MCF 10A (cell line): ENCODE measurements at regions of chr3 and their contacts with region 1.

Region 1: GRCh38 chr3:128969993-128970739 is 23.7 kb downstream of the CFAP92 start:
- DNase-seq: peak; percentile 43
- H3K4me3 Mint-ChIP-seq: no peak overlapping the region
- H3K27ac Mint-ChIP-seq: no peak overlapping the region
- H3K4me1 Mint-ChIP-seq: no peaks in the 10 kb centered on the region
- H3K27me3 Mint-ChIP-seq: no peaks in the 10 kb centered on the region
- CTCF ChIP-seq: peak; percentile 93

Region 2: DNA sequence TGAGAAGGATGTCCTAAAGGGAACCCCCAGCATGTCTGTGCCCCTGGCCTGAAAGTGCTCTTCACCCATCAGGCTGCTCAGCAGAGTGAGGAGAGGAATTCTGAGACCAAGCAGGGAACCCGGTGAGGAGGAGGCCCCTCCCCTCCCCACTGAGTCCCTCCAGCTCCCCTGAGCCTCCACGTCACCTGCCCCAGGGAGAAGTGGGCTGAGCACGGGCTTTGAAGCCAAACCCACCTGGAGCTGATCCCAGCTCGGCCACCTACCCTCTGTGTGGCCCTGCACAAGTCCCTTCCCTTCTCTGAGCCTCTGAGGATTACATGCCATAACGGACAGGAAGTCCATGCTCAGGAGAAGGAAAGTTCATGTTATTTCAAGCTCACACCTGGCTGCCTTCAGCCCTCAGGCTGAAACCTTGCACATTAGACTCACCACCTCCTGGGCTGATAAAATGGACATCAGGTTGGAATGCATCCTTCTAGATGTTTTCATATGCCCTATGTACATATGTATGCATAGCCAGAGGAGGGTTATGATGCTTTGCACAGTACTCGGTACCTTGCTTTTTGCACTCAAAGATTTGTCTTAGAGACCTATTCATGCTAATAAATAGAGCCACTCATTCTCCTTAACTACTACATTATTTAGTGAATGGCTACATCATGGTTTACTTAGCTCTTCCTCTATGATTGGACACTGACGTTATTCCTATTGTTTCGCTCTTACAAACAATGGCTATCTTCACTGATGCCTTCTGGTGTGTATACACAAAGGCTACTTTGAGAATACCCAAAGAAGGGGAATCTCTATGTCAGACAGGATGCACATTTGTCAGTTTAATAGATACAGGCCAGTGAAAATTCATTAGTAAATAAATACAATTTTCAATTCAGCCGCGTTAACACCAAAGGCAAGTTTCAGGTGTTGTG is 445.5 kb before region 1 on chr3:
- CTCF ChIA-PET with region 1: no interaction called
- POLR2A ChIA-PET with region 1: no interaction called
- intact Hi-C with region 1: no loop called
- DNase-seq: no peak
- H3K4me3 Mint-ChIP-seq: no peak overlapping the region
- H3K27ac Mint-ChIP-seq: no peak overlapping the region
- H3K4me1 Mint-ChIP-seq: no peaks in the 10 kb centered on the region
- H3K27me3 Mint-ChIP-seq: peaks cover 71% of the 10 kb centered on the region
- CTCF ChIP-seq: no peak

Region 3: DNA sequence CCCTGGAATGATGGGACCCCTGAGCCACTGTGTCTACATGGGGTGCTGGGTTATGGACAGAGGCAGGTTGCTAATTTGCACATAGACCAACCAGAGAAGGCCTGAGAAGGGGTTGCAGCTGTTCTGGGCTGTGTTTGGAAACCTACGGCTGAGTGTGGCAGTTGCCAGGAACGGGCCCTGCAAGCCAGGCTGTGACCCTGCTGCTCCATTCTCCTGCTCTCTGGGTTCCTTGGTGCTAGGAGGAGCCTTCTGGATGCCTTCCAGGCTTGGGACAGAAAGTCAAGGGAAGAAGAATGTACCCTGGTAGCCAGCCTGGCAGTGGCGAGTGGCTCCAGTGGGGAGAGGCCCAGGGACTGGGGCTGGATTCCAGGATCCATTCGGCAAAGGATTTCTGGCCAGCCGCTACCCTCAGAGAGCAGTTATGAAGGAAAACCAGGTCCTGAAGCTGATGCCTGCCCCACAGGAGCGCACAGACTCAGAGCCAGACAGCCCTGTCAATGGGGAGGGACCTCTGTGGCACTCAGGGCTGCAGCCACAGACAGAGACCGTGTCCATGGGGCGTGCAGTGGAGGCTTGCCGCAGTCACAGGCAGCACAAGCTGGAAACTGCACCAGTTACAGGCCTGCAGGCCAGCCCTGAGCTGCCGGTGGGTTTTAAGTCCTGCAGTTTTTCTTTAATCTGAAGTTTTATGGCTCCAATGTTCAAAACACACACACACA is 145.9 kb before region 1 on chr3:
- CTCF ChIA-PET with region 1: no interaction called
- POLR2A ChIA-PET with region 1: no interaction called
- intact Hi-C with region 1: no loop called
- DNase-seq: no peak
- H3K4me3 Mint-ChIP-seq: no peak overlapping the region
- H3K27ac Mint-ChIP-seq: no peak overlapping the region
- H3K4me1 Mint-ChIP-seq: no peaks in the 10 kb centered on the region
- H3K27me3 Mint-ChIP-seq: no peaks in the 10 kb centered on the region
- CTCF ChIP-seq: no peak

Region 4: GRCh38 chr3:128895843-128896697 is 74.1 kb before region 1 on chr3:
- CTCF ChIA-PET with region 1: no interaction called
- POLR2A ChIA-PET with region 1: no interaction called
- intact Hi-C with region 1: no loop called
- DNase-seq: no peak
- H3K4me3 Mint-ChIP-seq: no peak overlapping the region
- H3K27ac Mint-ChIP-seq: peak overlapping the region; percentile 67
- H3K4me1 Mint-ChIP-seq: peaks cover 6% of the 10 kb centered on the region
- H3K27me3 Mint-ChIP-seq: no peaks in the 10 kb centered on the region
- CTCF ChIP-seq: no peak

Region 5: DNA sequence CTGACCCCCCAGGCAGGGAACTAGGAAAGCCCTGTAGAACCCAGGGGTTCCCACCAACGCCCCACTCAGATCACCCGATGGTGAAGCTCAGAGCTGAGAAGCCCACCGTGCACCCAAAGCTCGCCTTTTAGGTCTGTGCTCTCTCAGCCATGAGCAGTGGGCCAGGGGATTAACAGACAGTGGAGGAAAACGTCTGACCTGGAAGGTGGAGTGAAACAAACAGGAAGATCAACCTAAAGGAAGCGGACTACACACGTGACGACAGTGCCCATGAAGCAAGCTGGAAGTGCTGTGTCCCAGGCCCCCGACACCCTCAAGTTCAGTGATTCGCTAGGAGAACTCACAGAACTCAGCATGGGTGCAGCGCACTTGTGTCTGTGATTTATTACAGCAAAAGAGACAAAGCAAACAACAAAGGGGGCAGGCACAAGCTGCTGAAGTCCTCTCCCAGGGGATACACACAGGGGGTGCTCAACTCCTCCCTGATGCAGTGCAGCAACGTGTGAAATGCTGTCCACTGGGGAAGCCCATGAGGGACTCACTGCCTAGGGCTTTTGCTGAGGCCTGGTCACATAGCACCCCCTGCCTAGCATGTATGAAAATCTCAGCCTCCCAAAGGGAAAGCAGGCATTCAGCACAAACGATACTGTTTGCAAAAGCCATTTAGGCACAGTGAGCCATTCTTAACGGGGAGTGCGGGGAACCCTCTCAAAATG is 19.8 kb before region 1 on chr3:
- CTCF ChIA-PET with region 1: interaction called, 12 read pairs
- POLR2A ChIA-PET with region 1: no interaction called
- intact Hi-C with region 1: no loop called
- DNase-seq: no peak
- H3K4me3 Mint-ChIP-seq: no peak overlapping the region
- H3K27ac Mint-ChIP-seq: no peak overlapping the region
- H3K4me1 Mint-ChIP-seq: no peaks in the 10 kb centered on the region
- H3K27me3 Mint-ChIP-seq: peaks cover 25% of the 10 kb centered on the region
- CTCF ChIP-seq: no peak

Region 6: GRCh38 chr3:128993461-128994173 is 23.5 kb after region 1 on chr3 and contains the start of gene CFAP92:
- CTCF ChIA-PET with region 1: interaction called, 26 read pairs
- POLR2A ChIA-PET with region 1: interaction called, 3 read pairs
- intact Hi-C with region 1: no loop called
- DNase-seq: peak; percentile 80
- H3K4me3 Mint-ChIP-seq: peak within 1 kb of the TSS; percentile 67
- H3K27ac Mint-ChIP-seq: peak within 1 kb of the TSS; percentile 13
- H3K4me1 Mint-ChIP-seq: no peaks in the 10 kb centered on the region
- H3K27me3 Mint-ChIP-seq: no peaks in the 10 kb centered on the region
- CTCF ChIP-seq: no peak
- total RNA-seq, gene CFAP92: 0.10 and 0.16 TPM in 2 replicates

Region 7: DNA sequence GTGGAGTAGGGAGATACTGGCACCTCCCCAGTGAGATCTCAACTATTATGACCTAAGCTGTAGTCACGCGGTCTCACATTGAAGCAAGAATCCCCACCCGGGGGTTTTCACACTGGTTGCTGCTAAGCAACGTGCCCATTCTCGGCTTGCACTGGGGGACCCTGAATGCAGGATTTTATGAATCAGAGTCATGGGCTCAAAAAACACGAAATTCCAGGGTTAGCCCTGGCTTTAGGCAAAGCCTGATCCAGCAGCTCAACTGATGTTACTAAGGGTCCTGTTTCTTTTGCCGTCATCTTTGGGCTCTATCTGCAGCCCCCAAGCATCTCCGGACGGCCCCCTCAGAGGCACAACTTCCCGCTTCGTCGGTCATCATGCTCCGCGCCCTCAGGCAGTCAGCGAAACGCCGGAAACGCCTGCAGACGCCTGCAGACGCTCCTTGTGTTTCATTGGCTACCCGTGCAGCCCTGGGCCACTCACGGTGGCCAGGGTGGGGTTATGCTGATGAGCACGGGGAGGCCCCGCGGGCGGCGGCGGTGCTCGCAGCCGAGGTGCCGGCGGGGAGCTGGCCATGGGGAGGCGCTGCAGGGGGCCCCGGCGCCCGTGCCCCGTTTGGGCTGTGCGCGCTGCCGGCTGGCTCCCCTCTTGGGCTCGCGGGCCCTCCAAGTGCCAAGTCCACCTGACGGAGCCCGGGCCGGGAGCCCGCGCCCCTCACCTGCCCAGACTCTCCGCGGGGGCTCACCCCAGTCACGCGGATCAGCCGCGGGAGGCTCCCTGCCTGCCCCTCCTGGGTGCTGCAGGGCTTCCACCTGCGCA is 56.8 kb after region 1 on chr3:
- CTCF ChIA-PET with region 1: interaction called, 11 read pairs
- POLR2A ChIA-PET with region 1: interaction called, 3 read pairs
- intact Hi-C with region 1: no loop called
- DNase-seq: peak; percentile 80
- H3K4me3 Mint-ChIP-seq: peak overlapping the region; percentile 56
- H3K27ac Mint-ChIP-seq: no peak overlapping the region
- H3K4me1 Mint-ChIP-seq: no peaks in the 10 kb centered on the region
- H3K27me3 Mint-ChIP-seq: peaks cover 16% of the 10 kb centered on the region
- CTCF ChIP-seq: peak; percentile 41

Region 8: DNA sequence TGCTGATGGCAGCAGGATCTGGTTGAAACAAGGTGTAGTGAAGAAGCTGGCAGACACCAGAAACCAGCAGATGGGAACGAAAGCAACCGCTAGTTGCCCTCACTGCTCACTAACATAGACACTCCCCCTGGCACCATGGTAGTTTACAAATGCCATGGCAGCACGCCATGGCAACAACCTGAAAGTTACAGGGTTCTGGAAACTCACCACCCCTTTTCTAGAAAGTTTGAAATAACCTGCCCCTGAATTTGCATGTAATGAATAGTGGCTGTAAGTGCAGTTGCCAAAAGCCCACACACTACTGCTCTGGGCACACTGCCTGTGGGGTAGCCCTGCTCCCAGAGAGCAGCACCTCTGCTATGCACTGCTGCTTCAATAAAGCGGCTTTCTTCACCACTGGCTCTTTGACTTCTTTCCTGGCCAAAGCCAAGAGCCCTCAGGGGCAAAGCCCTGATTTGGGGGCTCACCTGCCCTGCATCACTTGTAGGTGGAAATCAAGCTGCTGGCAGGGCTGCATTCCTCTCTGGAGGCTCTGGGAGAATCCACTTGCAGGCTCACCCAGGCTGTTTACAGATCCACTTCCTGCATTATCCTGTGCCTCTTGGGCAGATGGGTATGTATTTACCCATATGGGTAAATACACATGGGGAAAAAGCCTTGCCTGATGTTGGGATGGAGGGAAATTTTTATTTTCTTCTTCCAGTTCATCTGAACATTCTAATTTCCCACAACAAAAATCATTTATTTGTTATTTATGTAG is 88.5 kb after region 1 on chr3:
- CTCF ChIA-PET with region 1: interaction called, 61 read pairs
- POLR2A ChIA-PET with region 1: no interaction called
- intact Hi-C with region 1: no loop called
- DNase-seq: peak; percentile 17
- H3K4me3 Mint-ChIP-seq: no peak overlapping the region
- H3K27ac Mint-ChIP-seq: no peak overlapping the region
- H3K4me1 Mint-ChIP-seq: peaks cover 3% of the 10 kb centered on the region
- H3K27me3 Mint-ChIP-seq: peaks cover 20% of the 10 kb centered on the region
- CTCF ChIP-seq: no peak

Region 9: GRCh38 chr3:129120254-129121004 is 150.3 kb after region 1 on chr3:
- CTCF ChIA-PET with region 1: interaction called, 40 read pairs
- POLR2A ChIA-PET with region 1: interaction called, 5 read pairs
- intact Hi-C with region 1: no loop called
- DNase-seq: peak; percentile 98
- H3K4me3 Mint-ChIP-seq: peak overlapping the region; percentile 77
- H3K27ac Mint-ChIP-seq: peak overlapping the region; percentile 82
- H3K4me1 Mint-ChIP-seq: peaks cover 26% of the 10 kb centered on the region
- H3K27me3 Mint-ChIP-seq: no peaks in the 10 kb centered on the region
- CTCF ChIP-seq: no peak

Region 10: DNA sequence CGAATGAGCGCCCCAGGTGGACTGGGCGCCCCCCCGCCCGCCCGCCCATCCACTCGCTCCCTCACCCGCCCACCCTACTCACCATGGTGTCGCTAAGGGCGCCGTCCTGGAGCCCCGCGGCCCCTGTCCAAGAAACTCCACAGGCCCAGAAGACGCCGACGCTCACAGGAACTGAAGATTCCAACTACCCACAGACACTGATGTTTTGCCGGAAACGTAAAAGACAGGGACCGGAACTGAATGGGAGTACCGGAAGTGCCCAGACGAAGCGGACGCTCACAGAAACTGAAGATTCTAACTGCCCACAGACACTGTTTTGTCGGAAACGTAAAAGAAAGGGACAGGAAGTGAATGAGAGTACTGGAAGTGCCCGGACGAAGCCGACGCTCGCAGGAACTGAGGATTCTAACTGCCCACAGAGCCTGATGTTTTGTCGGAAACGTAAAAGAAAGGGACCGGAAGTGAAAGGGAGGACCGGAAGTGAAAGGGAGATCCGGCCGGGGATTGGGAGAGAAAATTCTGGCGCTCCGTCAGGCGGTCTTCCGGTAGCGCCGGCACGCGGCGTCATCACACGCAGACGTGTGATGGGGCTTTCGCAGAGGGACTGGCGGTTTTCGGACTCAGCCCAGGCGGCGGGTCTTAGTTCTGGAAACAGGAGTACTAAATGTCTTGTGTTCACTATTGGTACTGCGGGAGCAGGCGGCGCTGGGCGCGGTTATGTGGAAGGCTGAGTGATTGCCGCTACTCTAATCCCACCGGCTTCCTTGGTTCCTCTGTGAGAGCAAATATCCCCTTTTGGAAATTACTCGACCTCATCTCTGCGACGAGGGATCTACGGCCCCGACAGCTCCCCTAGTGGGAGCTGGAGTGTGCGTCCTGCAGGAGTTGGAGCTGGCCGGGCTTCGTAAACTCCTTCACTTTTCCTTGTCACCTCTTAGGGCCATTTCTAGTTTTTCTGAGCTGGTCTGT is 191.0 kb after region 1 on chr3 and contains the start of gene ISY1:
- CTCF ChIA-PET with region 1: interaction called, 24 read pairs
- POLR2A ChIA-PET with region 1: interaction called, 17 read pairs
- intact Hi-C with region 1: loop called (anchors 2 kb)
- DNase-seq: peak; percentile 96
- H3K4me3 Mint-ChIP-seq: peak within 1 kb of the TSS; percentile 98
- H3K27ac Mint-ChIP-seq: peak within 1 kb of the TSS; percentile 100
- H3K4me1 Mint-ChIP-seq: peaks cover 31% of the 10 kb centered on the region
- H3K27me3 Mint-ChIP-seq: no peaks in the 10 kb centered on the region
- CTCF ChIP-seq: peak; percentile 60
- total RNA-seq, gene ISY1: 52.5 and 57.8 TPM in 2 replicates